HEK293T (cell line): ENCODE measurements at regions of chr11 and their contacts with region 1.

Region 1: DNA sequence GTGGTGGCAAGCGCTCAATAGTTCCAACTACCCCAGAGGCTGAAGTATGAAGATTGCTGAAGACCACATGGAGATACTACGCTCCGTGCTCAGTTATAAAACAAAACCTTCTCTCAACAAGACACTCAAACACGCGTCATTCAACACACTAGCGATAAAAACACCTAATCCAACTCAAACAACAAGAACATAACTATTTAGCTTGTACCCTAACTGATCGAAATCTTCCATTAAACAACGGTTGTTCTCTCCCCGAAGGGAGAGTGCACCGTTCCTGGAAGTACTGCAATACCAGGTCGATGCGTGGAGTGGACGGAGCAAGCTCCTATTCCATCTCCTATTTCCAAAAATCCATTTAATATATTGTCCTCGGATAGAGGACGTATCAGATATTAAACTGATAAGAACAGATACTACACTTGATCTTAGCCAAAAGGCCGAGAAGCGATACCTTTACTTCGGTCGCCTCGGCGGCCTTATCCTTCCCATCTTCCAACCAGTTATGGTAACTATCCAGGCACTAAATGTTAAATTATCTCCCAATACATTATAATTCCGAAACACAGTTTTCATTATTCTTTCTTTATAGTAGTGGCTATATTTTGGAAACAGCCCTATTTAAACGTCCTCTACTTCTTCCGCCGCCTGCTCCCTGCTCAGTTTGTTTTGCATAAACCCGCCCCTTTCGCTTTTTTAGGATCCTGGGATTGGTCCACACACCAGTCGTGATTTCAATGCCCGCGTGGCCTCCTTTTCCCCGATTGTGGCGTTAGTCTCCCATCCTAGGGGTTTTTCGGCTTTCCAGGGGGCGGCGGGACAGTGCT is 2.2 kb upstream of the WDR74 start:
- DNase-seq: peak; percentile 89

Region 2: GRCh38 chr11:62753736-62754603 is 87.6 kb before region 1 on chr11 and contains the start of gene ZBTB3:
- CTCF ChIA-PET with region 1: no interaction called
- POLR2A ChIA-PET with region 1: interaction called, 35 read pairs
- DNase-seq: peak; percentile 94

Region 3: DNA sequence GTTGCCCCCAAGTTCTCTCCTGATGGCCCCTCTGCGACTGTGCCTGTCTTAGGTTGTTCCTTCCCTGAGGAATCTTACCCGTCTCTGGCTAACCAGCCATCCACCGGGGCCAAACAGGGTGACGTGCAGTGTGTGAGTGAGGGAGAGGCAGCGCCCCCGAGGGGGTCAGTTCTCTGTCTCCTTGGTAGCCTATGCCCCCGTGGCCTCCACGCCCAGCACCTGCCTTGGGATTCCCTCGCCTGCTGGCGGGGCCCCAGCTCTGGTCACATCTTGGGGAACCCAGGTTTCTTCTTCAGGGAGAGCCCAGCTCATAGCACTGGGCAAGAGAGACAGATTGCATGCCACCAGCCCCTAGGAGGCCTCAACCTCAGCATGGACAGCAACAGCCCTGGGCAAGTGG is 42.1 kb before region 1 on chr11:
- CTCF ChIA-PET with region 1: no interaction called
- POLR2A ChIA-PET with region 1: interaction called, 14 read pairs
- DNase-seq: no peak

Region 4: GRCh38 chr11:62823677-62824076 is 17.9 kb before region 1 on chr11:
- CTCF ChIA-PET with region 1: interaction called, 3 read pairs
- POLR2A ChIA-PET with region 1: interaction called, 28 read pairs
- DNase-seq: no peak

Region 5: GRCh38 chr11:62875698-62876478 is 34.3 kb after region 1 on chr11:
- CTCF ChIA-PET with region 1: no interaction called
- POLR2A ChIA-PET with region 1: interaction called, 110 read pairs
- DNase-seq: no peak

Region 6: DNA sequence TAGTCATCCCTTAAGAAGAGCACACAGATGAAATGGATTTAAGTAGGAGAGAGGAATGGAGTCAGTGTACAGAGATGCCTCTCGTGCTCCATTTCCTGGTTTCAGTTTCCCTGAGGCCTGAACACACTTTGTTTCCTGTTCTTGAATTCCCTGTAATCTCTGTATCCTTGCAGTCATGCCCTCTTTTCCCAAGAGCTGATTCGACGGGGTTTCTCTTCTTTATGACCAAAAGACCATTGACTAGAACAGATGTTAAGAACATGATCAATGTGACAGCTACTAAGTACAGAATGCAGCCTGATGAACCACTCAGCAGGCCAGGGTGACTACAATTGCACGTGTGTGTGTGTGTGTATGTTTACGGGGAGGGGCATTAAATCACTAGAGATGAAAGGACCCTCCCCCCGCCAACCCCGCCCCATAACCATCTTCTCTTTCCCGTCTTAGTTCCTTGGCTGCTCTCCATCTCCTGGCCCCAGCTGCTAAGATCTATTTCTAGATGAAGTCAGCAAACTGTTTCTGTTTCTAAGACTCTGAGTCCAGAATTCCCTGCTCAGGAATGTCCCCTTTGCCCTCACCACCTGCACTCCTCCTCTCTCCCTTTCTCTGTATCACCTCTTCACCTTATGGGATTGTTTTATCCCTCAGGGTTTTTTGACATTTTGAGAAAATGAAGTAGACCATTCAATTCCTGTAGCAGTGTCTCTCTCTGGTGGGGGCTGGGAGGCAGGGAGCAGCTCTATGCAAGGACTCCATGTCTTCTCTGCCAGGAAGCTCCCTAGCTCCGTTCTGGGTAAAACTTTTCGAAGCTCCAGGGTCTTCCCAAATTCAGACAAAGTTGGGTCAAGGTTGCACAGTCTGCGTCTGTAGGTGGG is 117.2 kb after region 1 on chr11:
- CTCF ChIA-PET with region 1: no interaction called
- POLR2A ChIA-PET with region 1: no interaction called
- DNase-seq: no peak